Activated naive CD4-positive, alpha-beta T cell treated with anti-CD3 and anti-CD28 coated beads for 36 hours (primary cell): ENCODE measurements at regions of chr17 and their contacts with region 1.

Region 1: DNA sequence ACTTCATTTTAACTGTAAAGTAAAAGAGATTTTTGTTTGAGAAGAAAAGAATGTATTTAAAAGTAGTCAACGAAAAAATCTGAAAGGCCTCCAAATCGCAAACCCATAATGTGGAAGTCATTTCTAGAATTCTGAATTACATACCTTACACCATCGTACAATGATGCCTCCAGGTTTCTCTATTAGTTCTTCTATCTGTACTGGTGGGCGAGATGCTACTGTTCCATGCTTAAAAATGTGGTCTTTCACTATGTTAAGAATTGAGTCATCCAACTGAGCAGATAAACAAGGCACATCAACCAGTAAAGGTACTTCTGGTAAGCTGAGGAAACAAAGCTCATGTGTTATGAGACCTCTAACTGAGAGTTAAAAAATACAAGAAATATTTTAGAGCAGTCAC is 28.5 kb downstream of the CRLF3 start:
- DNase-seq: no peak
- H3K4me3 Mint-ChIP-seq: no peak overlapping the region
- H3K27ac Mint-ChIP-seq: peak overlapping the region; percentile 91
- H3K4me1 Mint-ChIP-seq: peaks cover 17% of the 10 kb centered on the region
- H3K27me3 Mint-ChIP-seq: no peaks in the 10 kb centered on the region

Region 2: DNA sequence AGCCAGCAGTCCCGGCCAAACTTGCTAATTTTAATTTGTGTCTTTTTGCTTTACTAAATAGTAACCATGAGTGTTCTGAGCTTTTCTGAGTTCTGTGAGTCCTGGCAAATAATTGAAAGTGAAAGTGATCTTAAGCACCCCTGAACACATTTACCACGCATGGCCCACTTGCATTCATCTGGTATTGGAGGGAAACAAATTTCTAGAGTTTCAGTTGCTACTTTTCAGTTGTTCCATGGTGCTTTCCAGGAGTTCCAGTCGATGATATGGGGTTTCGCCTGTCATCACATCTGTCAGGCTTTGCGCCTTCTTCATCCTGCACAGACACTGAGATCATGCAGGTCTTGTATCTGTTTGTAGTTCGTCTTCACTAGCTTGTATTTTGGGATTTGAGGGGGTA is 15.7 kb before region 1 on chr17:
- CTCF ChIA-PET with region 1: no interaction called
- intact Hi-C with region 1: loop called (anchors 2 kb)
- DNase-seq: peak; percentile 57
- H3K4me3 Mint-ChIP-seq: no peak overlapping the region
- H3K27ac Mint-ChIP-seq: peak overlapping the region; percentile 80
- H3K4me1 Mint-ChIP-seq: peaks cover 18% of the 10 kb centered on the region
- H3K27me3 Mint-ChIP-seq: no peaks in the 10 kb centered on the region

Region 3: GRCh38 chr17:30808785-30809286 is 12.8 kb after region 1 on chr17:
- CTCF ChIA-PET with region 1: interaction called, 3 read pairs
- intact Hi-C with region 1: loop called (anchors 1 kb)
- DNase-seq: peak; percentile 49
- H3K4me3 Mint-ChIP-seq: peak overlapping the region; percentile 87
- H3K27ac Mint-ChIP-seq: peak overlapping the region; percentile 99
- H3K4me1 Mint-ChIP-seq: peaks cover 70% of the 10 kb centered on the region
- H3K27me3 Mint-ChIP-seq: no peaks in the 10 kb centered on the region